Spleen (tissue), 13 donors: ENCODE measurements at regions of chr19 and their contacts with region 1.

Region 1: GRCh38 chr19:1605236-1606137 is at the start of gene UQCR11:
- DNase-seq: peak; percentile 98
- H3K4me3 ChIP-seq: peak within 1 kb of the TSS; percentile 81 to 100 (median 96)
- H3K27ac ChIP-seq: peak within 1 kb of the TSS; percentile 80 to 95 (median 94)
- H3K4me1 ChIP-seq: peaks cover 36 to 94% (median 61%) of the 10 kb centered on the region in 6 donors
- H3K27me3 ChIP-seq: no peaks in the 10 kb centered on the region
- CTCF ChIP-seq: peak in 10 of 11 experiments; percentile 37 to 65 (median 58)
- POLR2A ChIP-seq: peak in 1 of 3 donors; percentile 9
- total RNA-seq, gene UQCR11: 40.9 to 165 (median 129) TPM

Region 2: GRCh38 chr19:1445185-1445931 is 160.1 kb before region 1 on chr19:
- intact Hi-C with region 1: no loop called
- DNase-seq: peak; percentile 97
- H3K4me3 ChIP-seq: peak overlapping the region; percentile 22 to 72 (median 44)
- H3K27ac ChIP-seq: peak overlapping the region in 4 of 8 donors; percentile 46 to 78 (median 66)
- H3K4me1 ChIP-seq: peaks cover 19 to 66% (median 52%) of the 10 kb centered on the region in 6 donors
- H3K27me3 ChIP-seq: peaks cover 9 to 58% (median 49%) of the 10 kb centered on the region in 7 donors
- CTCF ChIP-seq: peak; percentile 61 to 99 (median 96)
- POLR2A ChIP-seq: no peak

Region 3: GRCh38 chr19:1652471-1653299 is 47.2 kb after region 1 on chr19 and contains the start of gene TCF3:
- intact Hi-C with region 1: loop called (anchors 5 kb)
- DNase-seq: peak; percentile 99
- H3K4me3 ChIP-seq: peak within 1 kb of the TSS; percentile 80 to 98 (median 94)
- H3K27ac ChIP-seq: peak within 1 kb of the TSS; percentile 97 to 100 (median 99)
- H3K4me1 ChIP-seq: peaks cover 15 to 72% (median 48%) of the 10 kb centered on the region in 6 donors
- H3K27me3 ChIP-seq: peaks cover 0 to 10% (median 0%) of the 10 kb centered on the region in 7 donors
- CTCF ChIP-seq: peak in 4 of 11 experiments; percentile 26 to 49 (median 34)
- POLR2A ChIP-seq: peak in 2 of 3 donors; percentile 52 to 58
- total RNA-seq, gene TCF3: 79.2 to 135 (median 107) TPM